Caco-2 (cell line): ENCODE measurements at regions of chr6 and their contacts with region 1.

Region 1: GRCh38 chr6:126176282-126176681 is 163.6 kb upstream of the CENPW start:
- DNase-seq: peak in 1 of 2 experiments; percentile 34
- H3K4me3 ChIP-seq: no peak overlapping the region
- H3K4me3 Mint-ChIP-seq: no peak overlapping the region
- H3K27ac Mint-ChIP-seq: no peak overlapping the region
- H3K4me1 ChIP-seq: peaks cover 6% of the 10 kb centered on the region
- H3K4me1 Mint-ChIP-seq: peaks cover 2% of the 10 kb centered on the region
- H3K27me3 ChIP-seq: no peaks in the 10 kb centered on the region
- H3K27me3 Mint-ChIP-seq: no peaks in the 10 kb centered on the region
- CTCF ChIP-seq: peak; percentile 29 to 49

Region 2: DNA sequence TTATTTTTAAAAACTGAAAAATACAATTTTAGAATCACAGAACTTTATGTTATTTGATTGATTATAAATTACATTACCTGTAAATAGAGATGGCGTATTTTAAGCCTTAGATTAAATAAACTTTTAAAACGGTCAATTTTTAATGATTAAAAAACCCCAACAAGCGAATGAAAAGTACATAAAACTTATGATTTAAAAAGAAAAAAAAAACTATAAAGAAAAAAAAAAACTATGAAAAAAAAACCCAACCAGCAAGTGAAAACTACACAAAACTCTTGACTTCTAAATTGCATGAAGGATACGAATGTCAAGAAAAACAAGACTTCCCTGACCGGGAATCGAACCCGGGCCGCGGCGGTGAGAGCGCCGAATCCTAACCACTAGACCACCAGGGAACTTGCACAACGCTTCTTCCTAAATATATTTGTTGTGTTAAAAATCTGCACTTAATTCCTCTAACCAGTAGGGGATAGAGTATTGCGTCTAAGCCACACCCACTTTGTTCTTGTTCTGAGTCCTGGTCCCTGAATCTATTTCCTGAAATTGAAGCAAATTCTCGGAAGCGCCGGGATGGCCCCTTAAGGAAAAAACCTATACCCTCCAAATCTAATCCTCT is 396.2 kb before region 1 on chr6:
- CTCF ChIA-PET with region 1: no interaction called
- POLR2A ChIA-PET with region 1: no interaction called
- intact Hi-C with region 1: no loop called
- DNase-seq: peak; percentile 75 to 90
- H3K4me3 ChIP-seq: peak overlapping the region; percentile 61
- H3K4me3 Mint-ChIP-seq: no peak overlapping the region
- H3K27ac Mint-ChIP-seq: no peak overlapping the region
- H3K4me1 ChIP-seq: peaks cover 13% of the 10 kb centered on the region
- H3K4me1 Mint-ChIP-seq: peaks cover 14% of the 10 kb centered on the region
- H3K27me3 ChIP-seq: no peaks in the 10 kb centered on the region
- H3K27me3 Mint-ChIP-seq: no peaks in the 10 kb centered on the region
- CTCF ChIP-seq: peak; percentile 6 to 13

Region 3: DNA sequence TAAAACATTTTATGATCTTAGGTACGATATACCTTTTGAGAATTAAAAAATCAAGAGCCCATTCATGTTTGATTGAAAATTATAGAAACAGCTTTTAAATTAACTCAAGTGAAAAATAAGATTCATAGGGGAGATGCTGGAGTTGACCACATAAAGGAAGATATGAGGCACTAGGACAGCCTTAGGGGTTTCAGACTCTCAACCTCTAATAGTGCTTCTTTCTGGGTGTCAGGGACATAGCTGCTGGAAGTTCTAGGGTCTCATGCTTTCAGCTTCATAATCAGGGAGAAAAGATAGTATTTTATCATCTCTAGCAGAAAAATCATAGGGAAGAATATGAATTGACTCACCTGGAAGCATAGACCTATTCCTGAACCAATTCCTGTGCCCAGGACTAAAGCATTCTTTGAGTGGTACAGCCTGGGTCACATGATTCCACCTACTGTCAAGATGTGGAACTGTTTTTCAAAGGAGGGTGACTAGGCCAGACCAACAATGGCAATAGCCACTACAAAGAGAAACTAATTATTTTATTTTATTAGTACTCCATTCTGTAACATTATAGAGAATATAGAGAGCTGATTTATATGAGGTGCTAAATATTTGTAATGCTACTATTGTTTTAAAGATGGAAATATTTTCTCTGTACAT is 135.9 kb after region 1 on chr6:
- CTCF ChIA-PET with region 1: no interaction called
- POLR2A ChIA-PET with region 1: no interaction called
- intact Hi-C with region 1: loop called (anchors 1 kb)
- DNase-seq: peak in 1 of 2 experiments; percentile 40
- H3K4me3 ChIP-seq: no peak overlapping the region
- H3K4me3 Mint-ChIP-seq: no peak overlapping the region
- H3K27ac Mint-ChIP-seq: no peak overlapping the region
- H3K4me1 ChIP-seq: no peaks in the 10 kb centered on the region
- H3K4me1 Mint-ChIP-seq: no peaks in the 10 kb centered on the region
- H3K27me3 ChIP-seq: no peaks in the 10 kb centered on the region
- H3K27me3 Mint-ChIP-seq: peaks cover 2% of the 10 kb centered on the region
- CTCF ChIP-seq: peak; percentile 32 to 48

Region 4: DNA sequence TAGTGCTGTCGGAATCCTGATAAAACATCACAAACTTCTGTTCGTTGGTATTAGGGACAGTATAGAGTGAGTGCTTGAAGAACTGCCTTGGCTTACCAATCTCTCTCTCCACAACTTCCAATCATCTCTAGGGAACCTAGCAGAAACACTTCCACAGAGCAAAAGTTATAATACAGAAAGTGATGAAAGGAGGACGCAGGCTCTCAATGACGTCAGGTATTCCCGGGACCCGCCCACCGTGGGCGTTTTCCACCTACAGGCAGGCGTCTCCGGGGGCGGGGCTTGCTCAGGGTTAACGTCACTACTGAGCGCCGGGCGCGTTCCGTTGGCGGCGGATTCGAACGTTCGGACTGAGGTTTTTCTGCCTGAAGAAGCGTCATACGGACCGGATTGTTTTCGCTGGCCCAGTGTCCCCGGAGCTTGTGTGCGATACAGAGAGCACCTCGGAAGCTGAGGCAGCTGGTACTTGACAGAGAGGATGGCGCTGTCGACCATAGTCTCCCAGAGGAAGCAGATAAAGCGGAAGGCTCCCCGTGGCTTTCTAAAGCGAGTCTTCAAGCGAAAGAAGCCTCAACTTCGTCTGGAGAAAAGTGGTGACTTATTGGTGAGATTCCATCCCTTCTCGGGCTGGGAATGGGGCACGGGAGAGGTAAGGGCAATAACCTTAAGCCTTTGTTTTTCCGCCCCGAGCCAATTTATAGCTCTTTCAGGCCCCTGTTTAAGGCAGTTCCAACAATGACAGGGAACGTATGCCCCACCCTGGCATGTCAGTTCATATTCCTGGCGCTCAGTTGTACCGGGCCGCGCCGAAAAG is 163.7 kb after region 1 on chr6 and contains the start of gene CENPW:
- CTCF ChIA-PET with region 1: no interaction called
- POLR2A ChIA-PET with region 1: no interaction called
- intact Hi-C with region 1: loop called (anchors 5 kb)
- DNase-seq: peak; percentile 94 to 96
- H3K4me3 ChIP-seq: peak within 1 kb of the TSS; percentile 79
- H3K4me3 Mint-ChIP-seq: no peak within 1 kb of the TSS
- H3K27ac Mint-ChIP-seq: no peak within 1 kb of the TSS
- H3K4me1 ChIP-seq: 0 out of 2 replicates have a peak, but pooled peaks cover 4% of the 10 kb centered on the region
- H3K4me1 Mint-ChIP-seq: peaks cover 15% of the 10 kb centered on the region
- H3K27me3 ChIP-seq: no peaks in the 10 kb centered on the region
- H3K27me3 Mint-ChIP-seq: no peaks in the 10 kb centered on the region
- CTCF ChIP-seq: no peak
- total RNA-seq, gene CENPW: 64.4 and 70.7 TPM in 2 replicates

Region 5: GRCh38 chr6:126657561-126658175 is 481.4 kb after region 1 on chr6:
- CTCF ChIA-PET with region 1: no interaction called
- POLR2A ChIA-PET with region 1: no interaction called
- intact Hi-C with region 1: loop called (anchors 5 kb)
- DNase-seq: peak in 1 of 2 experiments; percentile 8
- H3K4me3 ChIP-seq: no peak overlapping the region
- H3K4me3 Mint-ChIP-seq: no peak overlapping the region
- H3K27ac Mint-ChIP-seq: no peak overlapping the region
- H3K4me1 ChIP-seq: no peaks in the 10 kb centered on the region
- H3K4me1 Mint-ChIP-seq: no peaks in the 10 kb centered on the region
- H3K27me3 ChIP-seq: no peaks in the 10 kb centered on the region
- H3K27me3 Mint-ChIP-seq: no peaks in the 10 kb centered on the region
- CTCF ChIP-seq: peak; percentile 20 to 25